Right cardiac atrium (tissue), 5 donors: ENCODE measurements at regions of chr10 and their contacts with region 1.

Region 1: GRCh38 chr10:7417103-7417623 is 6.3 kb upstream of the SFMBT2 start:
- DNase-seq: no peak
- ATAC-seq: no peak
- H3K4me3 ChIP-seq: no peak overlapping the region
- H3K27ac ChIP-seq: no peak overlapping the region
- H3K4me1 ChIP-seq: no peaks in the 10 kb centered on the region
- H3K27me3 ChIP-seq: peaks cover 2% of the 10 kb centered on the region

Region 2: DNA sequence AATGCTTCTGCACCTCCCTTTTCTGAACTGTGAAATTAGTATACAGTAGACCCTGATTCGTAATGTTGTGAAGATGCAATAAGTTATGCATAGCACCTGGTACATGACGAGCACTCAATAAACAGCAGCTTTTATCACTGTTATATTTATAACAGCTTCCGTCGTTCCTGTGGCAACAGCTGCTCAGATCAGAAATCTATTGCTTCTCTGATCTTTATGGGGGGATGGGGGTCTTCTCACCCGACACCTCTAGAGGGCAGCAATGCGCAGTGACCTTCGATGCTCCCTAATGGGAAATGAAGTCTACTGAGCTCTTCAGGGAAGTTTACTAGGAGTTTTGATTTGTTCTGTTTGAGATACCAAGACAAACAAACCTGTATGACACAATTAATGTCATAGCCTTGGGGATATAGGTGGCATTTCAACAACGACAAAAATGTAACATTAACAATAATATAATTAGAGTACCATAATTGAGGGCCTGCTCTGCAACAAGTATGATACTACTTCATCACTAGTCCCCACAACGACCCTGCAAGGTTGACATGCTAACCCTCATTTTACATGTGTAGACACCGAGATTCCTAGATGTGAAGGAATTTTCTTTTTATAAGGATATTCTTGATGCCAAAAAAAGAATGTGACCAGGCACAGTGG is 295.9 kb before region 1 on chr10:
- intact Hi-C with region 1: loop called (anchors 2 to 10 kb)
- DNase-seq: peak; percentile 47 to 72 (median 72)
- ATAC-seq: peak; percentile 64 to 70
- H3K4me3 ChIP-seq: no peak overlapping the region
- H3K27ac ChIP-seq: no peak overlapping the region
- H3K4me1 ChIP-seq: no peaks in the 10 kb centered on the region
- H3K27me3 ChIP-seq: no peaks in the 10 kb centered on the region